Activated naive CD4-positive, alpha-beta T cell treated with anti-CD3 and anti-CD28 coated beads for 36 hours (primary cell): ENCODE measurements at regions of chr1 and their contacts with region 1.

Region 1: GRCh38 chr1:114979278-114979891 is 50.2 kb upstream of the TSHB start:
- DNase-seq: peak; percentile 85
- H3K4me3 Mint-ChIP-seq: no peak overlapping the region
- H3K27ac Mint-ChIP-seq: no peak overlapping the region
- H3K4me1 Mint-ChIP-seq: peaks cover 2% of the 10 kb centered on the region
- H3K27me3 Mint-ChIP-seq: no peaks in the 10 kb centered on the region

Region 2: GRCh38 chr1:114948982-114949381 is 30.4 kb before region 1 on chr1:
- CTCF ChIA-PET with region 1: no interaction called
- intact Hi-C with region 1: no loop called
- DNase-seq: no peak
- H3K4me3 Mint-ChIP-seq: no peak overlapping the region
- H3K27ac Mint-ChIP-seq: no peak overlapping the region
- H3K4me1 Mint-ChIP-seq: no peaks in the 10 kb centered on the region
- H3K27me3 Mint-ChIP-seq: no peaks in the 10 kb centered on the region

Region 3: GRCh38 chr1:115052454-115053083 is 73.2 kb after region 1 on chr1:
- CTCF ChIA-PET with region 1: interaction called, 14 read pairs
- intact Hi-C with region 1: loop called (anchors 1 kb)
- DNase-seq: peak; percentile 73
- H3K4me3 Mint-ChIP-seq: no peak overlapping the region
- H3K27ac Mint-ChIP-seq: no peak overlapping the region
- H3K4me1 Mint-ChIP-seq: no peaks in the 10 kb centered on the region
- H3K27me3 Mint-ChIP-seq: no peaks in the 10 kb centered on the region

Region 4: DNA sequence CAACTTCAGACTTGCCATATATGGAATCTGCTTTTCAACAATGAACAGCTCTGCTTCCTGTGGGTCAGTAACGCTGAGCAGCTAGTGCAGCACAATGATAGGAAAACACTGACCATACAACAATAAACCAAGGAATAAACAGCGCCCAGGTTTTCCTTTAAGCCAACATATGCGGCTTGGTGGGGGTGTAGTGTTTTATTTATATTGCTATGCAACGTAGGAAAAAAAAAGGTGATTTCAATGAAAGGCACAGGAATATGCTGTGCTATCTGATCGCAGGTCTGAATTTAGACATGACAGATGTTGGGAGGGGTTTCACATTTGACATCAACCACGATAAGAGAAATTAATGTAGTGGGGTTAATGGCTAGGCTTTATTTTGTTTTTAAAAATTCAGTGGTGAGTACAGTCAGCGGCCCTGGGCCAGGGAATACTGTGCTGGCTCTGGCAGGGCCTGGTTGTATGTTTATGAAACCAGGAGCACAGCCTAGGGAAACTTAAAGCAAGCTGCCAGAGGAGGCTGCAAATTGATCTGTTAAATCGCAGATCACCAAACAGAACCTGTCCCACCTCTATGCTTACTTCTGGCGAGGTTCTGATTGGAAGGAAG is 105.6 kb after region 1 on chr1:
- CTCF ChIA-PET with region 1: no interaction called
- intact Hi-C with region 1: no loop called
- DNase-seq: no peak
- H3K4me3 Mint-ChIP-seq: no peak overlapping the region
- H3K27ac Mint-ChIP-seq: no peak overlapping the region
- H3K4me1 Mint-ChIP-seq: peaks cover 17% of the 10 kb centered on the region
- H3K27me3 Mint-ChIP-seq: no peaks in the 10 kb centered on the region

Region 5: DNA sequence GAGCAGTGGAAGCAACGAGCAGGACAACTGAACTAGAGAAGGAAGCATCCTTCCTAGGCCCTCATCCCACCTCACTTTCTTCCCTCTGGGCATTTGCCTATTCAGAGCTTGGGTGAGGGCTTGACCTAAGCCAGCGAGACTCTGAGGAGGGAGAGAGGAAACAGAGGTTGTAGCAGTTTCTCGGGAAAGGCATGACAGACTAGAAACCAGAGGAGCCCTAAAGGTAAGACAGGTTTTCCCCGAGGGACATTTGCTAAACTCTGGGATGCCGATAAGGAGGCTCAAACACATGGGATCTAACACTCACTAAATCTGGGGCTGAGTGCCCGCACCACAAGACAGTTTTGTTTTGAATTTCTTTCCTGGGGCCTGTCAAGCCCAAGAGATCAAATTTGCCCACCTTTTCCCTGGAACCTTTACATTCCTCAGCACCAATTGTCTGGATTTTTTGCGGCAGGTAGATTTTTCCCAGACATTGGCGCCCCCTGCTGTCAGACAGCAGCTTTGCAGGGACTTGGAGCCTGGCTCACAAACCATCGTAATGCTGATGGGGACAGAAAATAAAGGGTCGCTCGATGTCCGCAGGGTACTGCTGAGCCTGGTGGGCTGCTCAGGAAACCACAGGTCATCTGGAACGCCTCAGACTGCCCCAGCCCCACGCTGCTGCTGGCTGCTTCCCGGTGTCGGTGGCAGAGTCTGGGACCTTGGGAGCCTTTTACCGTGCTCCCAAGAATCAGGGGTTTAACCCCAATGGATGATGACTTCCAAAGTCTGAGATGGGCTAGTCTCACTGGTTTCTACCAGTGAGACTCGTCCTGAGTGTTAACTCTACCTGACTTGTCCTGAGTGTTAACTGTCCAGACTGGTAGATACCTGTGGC is 133.4 kb after region 1 on chr1:
- CTCF ChIA-PET with region 1: interaction called, 36 read pairs
- intact Hi-C with region 1: loop called (anchors 1 kb)
- DNase-seq: peak; percentile 55
- H3K4me3 Mint-ChIP-seq: no peak overlapping the region
- H3K27ac Mint-ChIP-seq: no peak overlapping the region
- H3K4me1 Mint-ChIP-seq: peaks cover 8% of the 10 kb centered on the region
- H3K27me3 Mint-ChIP-seq: no peaks in the 10 kb centered on the region